ENCODE measurements at regions of chr4 and their contacts with region 1.

Region 1: DNA sequence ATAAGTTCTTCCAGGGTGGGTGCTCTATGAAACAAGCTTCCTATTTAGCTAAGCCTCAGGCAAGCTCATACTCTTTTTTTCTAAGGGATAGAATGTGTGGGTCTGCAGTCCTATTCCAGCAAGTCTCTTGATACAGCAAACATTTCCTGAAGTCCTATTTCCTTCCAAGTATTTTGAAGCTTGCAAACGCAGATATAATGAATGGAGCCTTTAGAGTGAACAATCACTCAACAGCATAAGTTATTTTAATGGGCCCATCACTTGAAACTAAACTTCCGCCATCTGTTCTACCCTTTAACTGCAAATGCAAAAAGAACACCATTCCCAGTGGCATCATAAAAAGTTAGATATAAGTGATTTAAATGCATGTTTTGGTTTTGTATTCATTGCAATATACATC is 108.3 kb upstream of the TAPT1 start:
- DNase-seq: no peak
- ATAC-seq: no peak
- H3K4me3 ChIP-seq: no peak overlapping the region
- H3K27ac ChIP-seq: no peak overlapping the region
- H3K4me1 ChIP-seq: no peaks in the 10 kb centered on the region
- H3K27me3 ChIP-seq: no peaks in the 10 kb centered on the region
- CTCF ChIP-seq: no peak

Region 2: GRCh38 chr4:16171831-16172230 is 162.8 kb before region 1 on chr4:
- intact Hi-C with region 1: no loop called
- DNase-seq: no peak
- ATAC-seq: no peak
- H3K4me3 ChIP-seq: no peak overlapping the region
- H3K27ac ChIP-seq: no peak overlapping the region
- H3K4me1 ChIP-seq: no peaks in the 10 kb centered on the region
- H3K27me3 ChIP-seq: no peaks in the 10 kb centered on the region
- CTCF ChIP-seq: no peak

Region 3: GRCh38 chr4:18063079-18063478 is 1728.5 kb after region 1 on chr4:
- intact Hi-C with region 1: loop called in 1 of 10 experiments (anchors 5 kb)
- DNase-seq: no peak
- ATAC-seq: no peak
- H3K4me3 ChIP-seq: no peak overlapping the region
- H3K27ac ChIP-seq: no peak overlapping the region
- H3K4me1 ChIP-seq: peaks cover 0 to 1% (median 0%) of the 10 kb centered on the region in 9 donors
- H3K27me3 ChIP-seq: no peaks in the 10 kb centered on the region
- CTCF ChIP-seq: no peak

Measured in heart right ventricle (tissue), 16 donors.